ENCODE measurements at regions of chr14 and their contacts with region 1.

Region 1: GRCh38 chr14:65287264-65288131 is 125.0 kb upstream of the FUT8 start:
- DNase-seq: peak; percentile 82
- ATAC-seq: peak; percentile 75
- H3K4me3 Mint-ChIP-seq: peak overlapping the region; percentile 71
- H3K27ac Mint-ChIP-seq: peak overlapping the region; percentile 93
- H3K4me1 Mint-ChIP-seq: peaks cover 68% of the 10 kb centered on the region
- H3K27me3 Mint-ChIP-seq: no peaks in the 10 kb centered on the region

Region 2: DNA sequence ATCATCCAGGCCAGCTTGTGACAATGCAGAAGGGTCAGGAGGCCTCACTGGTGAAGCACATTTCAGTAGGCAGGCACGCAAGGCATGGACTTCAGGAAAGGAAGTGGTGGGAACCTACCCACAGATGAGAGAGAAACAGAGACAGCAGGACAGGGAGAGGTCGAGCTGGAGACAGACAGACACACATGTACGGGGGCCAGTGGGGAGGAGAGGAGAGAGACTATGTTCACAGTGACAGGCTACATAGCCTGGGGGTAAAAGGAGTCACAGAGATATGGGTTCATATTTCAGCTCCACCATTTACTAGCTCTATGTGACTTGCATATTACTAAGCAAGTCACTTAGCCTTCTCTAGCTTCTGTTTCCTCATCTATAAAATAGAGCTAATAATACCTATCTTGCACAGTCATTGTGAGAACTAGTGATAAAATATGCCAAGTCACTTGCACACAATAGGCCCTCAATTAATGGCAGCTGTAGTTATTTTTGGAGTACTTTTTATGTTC is 33.9 kb after region 1 on chr14:
- CTCF ChIA-PET with region 1: interaction called, 10 read pairs
- DNase-seq: peak; percentile 75
- ATAC-seq: peak; percentile 85
- H3K4me3 Mint-ChIP-seq: peak overlapping the region; percentile 18
- H3K27ac Mint-ChIP-seq: peak overlapping the region; percentile 88
- H3K4me1 Mint-ChIP-seq: peaks cover 62% of the 10 kb centered on the region
- H3K27me3 Mint-ChIP-seq: no peaks in the 10 kb centered on the region